AG04449 (cell line): ENCODE measurements at regions of chr3 and their contacts with region 1.

Region 1: GRCh38 chr3:160163229-160163878 is 61.9 kb upstream of the C3orf80 start:
- DNase-seq: no peak
- H3K4me3 ChIP-seq: no peak overlapping the region
- CTCF ChIP-seq: peak; percentile 14

Region 2: DNA sequence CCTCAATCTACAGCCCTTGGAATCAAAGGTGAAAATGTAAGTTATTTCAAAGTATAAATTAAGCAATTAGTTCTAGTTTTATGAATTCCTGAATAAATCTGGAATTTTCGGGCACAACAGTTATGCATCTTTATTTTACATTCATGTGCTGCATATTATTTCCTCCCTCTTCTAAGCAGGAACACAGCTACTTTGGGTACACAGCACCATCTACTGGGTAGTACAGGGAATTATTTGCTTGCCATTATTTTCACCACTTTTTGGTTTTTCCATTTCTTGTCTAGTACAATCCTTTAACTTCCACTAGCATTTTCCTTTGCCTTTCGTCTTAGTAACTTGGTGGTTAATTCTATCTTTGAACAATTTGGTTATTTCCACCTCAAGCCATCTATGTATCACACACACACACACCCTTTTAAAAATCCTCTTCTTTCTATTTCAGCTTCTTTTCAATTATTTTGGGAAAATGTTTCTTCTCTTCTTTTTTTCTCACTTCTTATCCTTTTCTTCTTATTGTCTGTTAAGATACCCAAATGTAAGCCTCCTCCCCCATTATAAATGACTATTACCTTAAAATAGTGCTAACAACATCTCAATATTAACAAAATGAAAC is 910.5 kb before region 1 on chr3:
- CTCF ChIA-PET with region 1: no interaction called
- POLR2A ChIA-PET with region 1: no interaction called
- DNase-seq: no peak
- H3K4me3 ChIP-seq: no peak overlapping the region
- CTCF ChIP-seq: peak; percentile 50

Region 3: GRCh38 chr3:160027541-160028195 is 135.7 kb before region 1 on chr3:
- CTCF ChIA-PET with region 1: interaction called, 16 read pairs
- POLR2A ChIA-PET with region 1: no interaction called
- DNase-seq: peak; percentile 26
- H3K4me3 ChIP-seq: no peak overlapping the region
- CTCF ChIP-seq: no peak

Region 4: GRCh38 chr3:160150525-160150924 is 12.8 kb before region 1 on chr3:
- CTCF ChIA-PET with region 1: interaction called, 43 read pairs
- POLR2A ChIA-PET with region 1: no interaction called
- DNase-seq: no peak
- H3K4me3 ChIP-seq: no peak overlapping the region
- CTCF ChIP-seq: no peak

Region 5: GRCh38 chr3:160210799-160211221 is 47.5 kb after region 1 on chr3:
- CTCF ChIA-PET with region 1: interaction called, 35 read pairs
- POLR2A ChIA-PET with region 1: no interaction called
- DNase-seq: peak; percentile 7
- H3K4me3 ChIP-seq: no peak overlapping the region
- CTCF ChIP-seq: peak; percentile 24

Region 6: GRCh38 chr3:160343132-160343531 is 179.8 kb after region 1 on chr3:
- CTCF ChIA-PET with region 1: interaction called, 120 read pairs
- POLR2A ChIA-PET with region 1: no interaction called
- DNase-seq: no peak
- H3K4me3 ChIP-seq: no peak overlapping the region
- CTCF ChIP-seq: no peak

Region 7: GRCh38 chr3:160413613-160414248 is 250.4 kb after region 1 on chr3:
- CTCF ChIA-PET with region 1: interaction called, 133 read pairs
- POLR2A ChIA-PET with region 1: no interaction called
- DNase-seq: no peak
- H3K4me3 ChIP-seq: no peak overlapping the region
- CTCF ChIP-seq: peak; percentile 70